HCT116 (cell line): ENCODE measurements at regions of chr18 and their contacts with region 1.

Region 1: GRCh38 chr18:21391074-21391673 is 149.1 kb downstream of the GREB1L start:
- DNase-seq: peak; percentile 89
- ATAC-seq: peak; percentile 93
- H3K4me3 ChIP-seq: peak overlapping the region in 1 of 2 experiments; percentile 35; a peak in 1 of 4 replicates
- H3K27ac ChIP-seq: peak overlapping the region; percentile 54; the same call in 1 of the 2 replicates
- H3K4me1 ChIP-seq: peaks cover 8 to 37% of the 10 kb centered on the region in 2 experiments
- H3K27me3 ChIP-seq: no peaks in the 10 kb centered on the region
- CTCF ChIP-seq: no peak
- POLR2A ChIP-seq: no peak
- RAD21 ChIP-seq: no peak

Region 2: DNA sequence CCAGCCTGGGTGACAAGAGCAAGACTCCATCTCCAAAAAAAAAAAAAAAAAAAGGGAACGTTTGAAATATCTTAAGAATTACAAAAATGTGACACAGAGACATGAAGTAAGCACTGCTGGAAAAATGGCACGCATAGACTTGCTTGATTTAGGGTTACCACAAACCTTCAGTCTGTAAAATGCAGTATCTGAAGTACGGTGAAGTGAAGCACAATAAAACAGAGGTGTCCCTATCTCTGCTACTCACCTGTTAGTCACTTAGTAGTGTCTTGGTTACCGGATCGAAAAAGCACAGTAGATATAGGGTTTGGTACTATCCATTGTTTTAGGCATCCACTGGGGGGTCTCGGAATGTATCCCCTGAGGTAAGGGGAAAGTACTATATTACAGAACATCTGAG is 160.7 kb before region 1 on chr18:
- CTCF ChIA-PET with region 1: no interaction called
- POLR2A ChIA-PET with region 1: no interaction called
- RAD21 ChIA-PET with region 1: no interaction called
- intact Hi-C with region 1: loop called (anchors 10 kb)
- DNase-seq: no peak
- ATAC-seq: no peak
- H3K4me3 ChIP-seq: no peak overlapping the region
- H3K27ac ChIP-seq: no peak overlapping the region
- H3K4me1 ChIP-seq: no peaks in the 10 kb centered on the region
- H3K27me3 ChIP-seq: no peaks in the 10 kb centered on the region
- CTCF ChIP-seq: no peak
- POLR2A ChIP-seq: no peak
- RAD21 ChIP-seq: no peak

Region 3: DNA sequence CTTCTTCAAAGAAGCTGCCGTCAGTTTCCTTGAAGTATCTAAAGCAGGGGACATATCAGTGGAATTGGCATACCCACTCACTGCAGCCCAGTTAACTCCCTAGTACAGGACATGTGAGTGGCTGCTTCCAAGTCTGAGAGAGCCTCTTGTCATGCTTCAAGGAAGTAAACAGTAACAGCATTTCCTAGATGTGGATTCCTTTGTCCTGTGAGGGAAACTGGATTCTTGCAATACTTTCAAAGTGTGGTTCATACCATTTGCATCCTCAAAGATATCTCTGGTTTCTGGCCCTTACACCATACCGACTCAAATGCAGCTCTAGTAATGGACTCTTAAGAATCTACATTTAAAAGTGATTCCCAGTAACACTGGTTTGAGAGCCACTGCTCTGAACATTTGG is 122.1 kb after region 1 on chr18:
- CTCF ChIA-PET with region 1: no interaction called
- POLR2A ChIA-PET with region 1: no interaction called
- RAD21 ChIA-PET with region 1: no interaction called
- intact Hi-C with region 1: no loop called
- DNase-seq: no peak
- ATAC-seq: no peak
- H3K4me3 ChIP-seq: no peak overlapping the region
- H3K27ac ChIP-seq: no peak overlapping the region
- H3K4me1 ChIP-seq: no peaks in the 10 kb centered on the region
- H3K27me3 ChIP-seq: no peaks in the 10 kb centered on the region
- CTCF ChIP-seq: no peak
- POLR2A ChIP-seq: no peak
- RAD21 ChIP-seq: no peak